ENCODE measurements at regions of chr20 and their contacts with region 1.

Region 1: DNA sequence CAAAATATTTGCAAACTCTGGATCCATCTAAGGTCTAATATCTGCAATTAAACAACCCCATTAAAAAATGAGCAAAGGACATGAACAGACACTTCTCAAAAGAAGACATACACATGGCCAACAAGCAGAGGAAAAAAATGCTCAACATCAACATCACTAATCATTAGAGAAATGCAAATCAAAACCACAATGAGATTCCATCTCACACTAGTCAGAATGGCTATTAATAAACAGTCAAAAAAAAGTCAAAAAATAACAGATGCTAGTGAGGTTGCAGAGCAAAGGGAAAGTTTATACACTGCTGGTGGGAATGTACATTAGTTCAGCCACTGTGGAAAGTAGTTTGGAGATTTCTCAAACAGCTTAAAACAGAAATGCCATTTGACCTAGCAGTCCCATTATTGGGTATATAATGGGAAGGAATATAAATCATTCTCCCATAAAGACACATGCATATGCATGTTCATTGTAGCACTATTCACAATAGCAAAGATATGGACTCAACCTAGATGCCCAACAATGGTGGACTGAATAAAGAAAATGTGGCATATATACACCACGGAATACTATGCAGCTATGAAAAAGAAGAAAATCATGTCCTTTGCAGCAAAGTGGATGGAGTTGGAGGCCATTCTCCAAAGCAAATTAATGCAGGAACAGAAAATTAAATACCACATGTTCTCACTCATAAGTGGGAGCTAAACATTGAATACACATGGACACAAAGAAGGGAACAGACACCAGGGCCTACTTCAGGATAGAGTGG is 9.1 kb downstream of the ZNFX1 start:
- DNase-seq: no peak
- CTCF ChIP-seq: no peak

Region 2: GRCh38 chr20:49046087-49046900 is 222.5 kb before region 1 on chr20 and contains the start of gene CSE1L:
- CTCF ChIA-PET with region 1: no interaction called
- POLR2A ChIA-PET with region 1: no interaction called
- DNase-seq: peak; percentile 97
- CTCF ChIP-seq: no peak

Region 3: GRCh38 chr20:49256261-49256660 is 12.5 kb before region 1 on chr20:
- CTCF ChIA-PET with region 1: interaction called, 17 read pairs
- POLR2A ChIA-PET with region 1: interaction called, 7 read pairs
- DNase-seq: no peak
- CTCF ChIP-seq: no peak

Measured in GM10248 (cell line).